Panc1 (cell line): ENCODE measurements at regions of chr1 and their contacts with region 1.

Region 1: DNA sequence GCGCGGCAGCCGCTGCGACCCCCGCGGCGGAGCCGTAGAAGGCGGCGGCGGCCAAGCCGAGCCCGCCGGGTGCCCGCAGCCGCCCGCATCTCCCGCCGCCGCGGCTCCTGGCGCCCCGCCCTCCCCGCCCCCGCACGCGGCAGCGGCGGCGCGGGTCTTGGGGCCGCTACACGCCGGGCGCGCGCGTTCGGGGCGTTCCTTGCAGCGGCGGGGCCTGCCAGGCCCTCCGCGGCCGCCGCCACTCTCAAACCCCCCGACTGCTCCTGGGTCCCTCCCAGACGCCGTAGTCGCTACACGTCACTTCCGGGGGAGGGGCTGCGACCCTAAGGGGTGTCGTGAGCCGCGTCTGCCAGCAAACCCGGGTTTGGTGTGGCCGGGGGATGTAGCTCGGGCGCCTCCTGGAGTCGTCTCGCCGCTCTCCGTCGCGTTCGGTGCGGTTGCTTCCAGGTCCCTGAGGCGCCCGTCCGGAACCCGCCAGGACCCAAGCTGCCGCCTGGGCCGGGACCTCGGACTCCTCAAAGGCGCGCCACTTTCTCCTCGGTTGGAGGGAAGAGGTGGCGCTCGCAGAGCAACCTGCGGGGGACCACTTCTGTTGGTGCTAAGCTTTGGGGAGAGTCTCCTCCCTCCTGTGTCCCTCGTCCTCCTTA is at the start of gene ELK4:
- DNase-seq: peak; percentile 84
- ATAC-seq: peak; percentile 98
- H3K4me3 ChIP-seq: peak within 1 kb of the TSS; percentile 84 to 94
- H3K27ac ChIP-seq: peak within 1 kb of the TSS; percentile 95
- H3K4me1 ChIP-seq: peaks cover 18% of the 10 kb centered on the region
- H3K27me3 ChIP-seq: no peaks in the 10 kb centered on the region
- CTCF ChIP-seq: peak; percentile 88
- total RNA-seq, gene ELK4: 54.6 TPM

Region 2: GRCh38 chr1:205504311-205504984 is 127.4 kb before region 1 on chr1 and contains the start of gene CDK18:
- CTCF ChIA-PET with region 1: no interaction called
- POLR2A ChIA-PET with region 1: no interaction called
- in situ Hi-C with region 1: no loop called
- intact Hi-C with region 1: no loop called
- DNase-seq: no peak
- ATAC-seq: peak; percentile 79
- H3K4me3 ChIP-seq: peak within 1 kb of the TSS; percentile 53 to 62
- H3K27ac ChIP-seq: peak within 1 kb of the TSS; percentile 63
- H3K4me1 ChIP-seq: peaks cover 4% of the 10 kb centered on the region; the same call in 1 of the 2 replicates
- H3K27me3 ChIP-seq: peaks cover 4% of the 10 kb centered on the region
- CTCF ChIP-seq: no peak
- total RNA-seq, gene CDK18: 7.0 TPM

Region 3: GRCh38 chr1:205528887-205529825 is 102.7 kb before region 1 on chr1:
- CTCF ChIA-PET with region 1: interaction called, 5 read pairs
- POLR2A ChIA-PET with region 1: no interaction called
- in situ Hi-C with region 1: no loop called
- intact Hi-C with region 1: loop called (anchors 2 kb)
- DNase-seq: no peak
- ATAC-seq: peak; percentile 89
- H3K4me3 ChIP-seq: peak overlapping the region; percentile 20 to 33; a peak in 3 of 4 replicates
- H3K27ac ChIP-seq: no peak overlapping the region
- H3K4me1 ChIP-seq: peaks cover 11% of the 10 kb centered on the region
- H3K27me3 ChIP-seq: no peaks in the 10 kb centered on the region
- CTCF ChIP-seq: peak; percentile 98

Region 4: DNA sequence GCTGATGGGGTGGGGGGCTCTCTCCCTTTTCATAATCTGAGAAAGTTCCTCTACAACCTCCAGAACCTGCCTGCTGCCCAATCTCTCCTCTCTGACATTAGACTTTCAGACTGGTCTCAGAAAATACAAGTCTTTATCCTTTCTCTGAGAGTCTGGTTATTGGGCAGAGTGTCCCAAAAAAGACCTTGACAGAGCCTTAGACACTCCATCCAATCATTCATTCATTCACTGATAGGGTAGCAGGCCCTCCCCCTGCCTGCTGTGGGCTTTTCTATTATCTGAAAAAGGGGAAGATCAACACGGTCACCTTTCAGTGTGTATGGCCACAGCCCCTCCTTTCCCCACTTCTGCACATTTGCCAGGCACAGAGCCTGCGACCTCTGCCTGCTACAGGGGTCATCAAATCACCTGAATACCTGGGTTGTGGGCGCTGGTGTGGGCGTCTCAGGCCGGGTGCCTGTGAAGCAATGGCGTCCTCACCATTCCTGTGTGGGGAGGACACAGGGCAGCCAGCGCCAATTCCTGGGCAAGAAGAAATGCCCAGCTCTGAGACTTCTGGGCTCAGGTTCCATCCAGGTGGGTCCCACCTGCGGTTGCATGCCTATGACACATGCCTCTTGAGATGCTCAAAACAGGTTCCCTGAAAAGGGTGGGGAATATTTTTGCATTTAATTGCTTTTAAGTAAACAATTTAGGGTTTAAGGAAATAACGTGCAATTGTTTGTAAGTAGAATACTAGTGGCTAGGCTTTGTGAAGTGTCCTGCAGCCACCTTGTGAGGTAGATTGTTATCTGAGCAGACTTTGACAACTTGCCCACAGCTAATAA is 52.9 kb before region 1 on chr1:
- CTCF ChIA-PET with region 1: no interaction called
- POLR2A ChIA-PET with region 1: no interaction called
- in situ Hi-C with region 1: no loop called
- intact Hi-C with region 1: no loop called
- DNase-seq: no peak
- ATAC-seq: no peak
- H3K4me3 ChIP-seq: no peak overlapping the region
- H3K27ac ChIP-seq: no peak overlapping the region
- H3K4me1 ChIP-seq: no peaks in the 10 kb centered on the region
- H3K27me3 ChIP-seq: no peaks in the 10 kb centered on the region
- CTCF ChIP-seq: no peak

Region 5: DNA sequence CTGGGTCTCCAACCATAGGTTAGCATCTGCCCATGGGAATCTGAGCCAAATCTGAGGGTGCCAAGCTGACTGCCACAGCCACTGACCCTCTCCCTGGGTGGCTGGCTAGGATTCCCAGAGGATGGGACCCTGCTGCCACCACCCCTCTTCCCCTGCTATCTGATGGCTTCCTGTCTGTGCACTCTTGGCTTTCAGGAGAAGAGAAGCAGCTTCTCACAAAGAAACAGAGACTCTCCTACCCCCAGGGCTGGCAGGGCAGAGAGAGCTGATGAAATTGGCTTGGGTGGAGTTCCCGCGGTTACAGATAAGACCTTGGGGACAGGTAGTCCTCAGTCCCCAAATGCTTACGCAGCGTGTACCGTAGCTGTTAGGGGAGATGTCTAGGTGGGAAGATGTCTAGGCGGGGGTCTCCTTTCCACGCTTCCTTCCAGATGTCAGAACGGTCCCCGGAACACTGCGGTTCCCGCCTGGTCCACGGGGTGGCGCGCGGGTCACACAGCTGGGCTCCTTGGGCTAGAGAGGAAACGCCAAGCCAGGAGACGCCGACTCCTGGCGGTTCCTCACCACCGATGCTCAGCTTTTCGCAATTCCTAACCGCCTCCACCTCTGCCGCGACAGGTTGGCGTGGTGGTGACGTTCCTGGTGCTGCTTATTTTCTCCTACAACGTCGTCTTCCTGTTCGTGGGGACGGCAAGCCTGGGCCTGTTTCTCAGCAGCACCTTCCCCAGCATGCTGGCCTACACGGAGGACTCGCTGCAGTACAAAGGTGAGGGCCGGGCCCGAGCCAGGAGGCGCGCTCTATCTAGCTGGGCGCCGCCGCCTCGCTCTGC is 40.1 kb before region 1 on chr1:
- CTCF ChIA-PET with region 1: interaction called, 14 read pairs
- POLR2A ChIA-PET with region 1: interaction called, 16 read pairs
- in situ Hi-C with region 1: no loop called
- intact Hi-C with region 1: loop called (anchors 2 kb)
- DNase-seq: peak; percentile 58
- ATAC-seq: peak; percentile 96
- H3K4me3 ChIP-seq: peak overlapping the region; percentile 27 to 56
- H3K27ac ChIP-seq: peak overlapping the region; percentile 41
- H3K4me1 ChIP-seq: no peaks in the 10 kb centered on the region; the same call in 1 of the 2 replicates
- H3K27me3 ChIP-seq: no peaks in the 10 kb centered on the region
- CTCF ChIP-seq: peak; percentile 99

Region 6: DNA sequence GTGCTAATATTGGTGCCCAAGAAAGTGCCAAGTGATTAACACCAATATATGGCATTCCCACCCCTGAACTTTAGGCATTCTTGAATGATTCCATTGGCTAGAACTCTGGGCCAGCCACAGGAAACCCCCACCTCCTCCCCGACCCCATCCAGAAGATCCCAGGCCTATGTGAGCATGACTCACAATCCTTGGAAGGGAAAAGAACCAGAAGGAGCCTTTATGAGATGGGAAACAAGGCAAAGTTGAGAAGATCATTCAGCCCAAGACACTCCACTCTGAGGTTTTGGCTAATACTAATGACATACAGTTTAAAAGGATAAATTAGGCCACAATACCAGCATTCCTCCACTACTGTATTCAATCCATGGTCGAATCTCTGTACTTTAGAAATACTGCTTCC is 21.8 kb before region 1 on chr1:
- CTCF ChIA-PET with region 1: no interaction called
- POLR2A ChIA-PET with region 1: no interaction called
- in situ Hi-C with region 1: no loop called
- intact Hi-C with region 1: loop called (anchors 1 kb)
- DNase-seq: no peak
- ATAC-seq: no peak
- H3K4me3 ChIP-seq: no peak overlapping the region
- H3K27ac ChIP-seq: no peak overlapping the region
- H3K4me1 ChIP-seq: 0 out of 2 replicates have a peak, but pooled peaks cover 6% of the 10 kb centered on the region
- H3K27me3 ChIP-seq: no peaks in the 10 kb centered on the region
- CTCF ChIP-seq: no peak